ENCODE measurements at regions of chr7 and their contacts with region 1.

Region 1: GRCh38 chr7:98745722-98746318 is 124.0 kb downstream of the TMEM130 start:
- DNase-seq: peak; percentile 36 to 79 (median 60)
- ATAC-seq: peak in 1 of 4 donors; percentile 45
- H3K4me3 ChIP-seq: no peak overlapping the region
- H3K27ac ChIP-seq: no peak overlapping the region
- H3K4me1 ChIP-seq: no peaks in the 10 kb centered on the region
- H3K27me3 ChIP-seq: peaks cover 0 to 13% (median 0%) of the 10 kb centered on the region in 9 donors
- CTCF ChIP-seq: peak; percentile 55 to 82 (median 70)
- POLR2A ChIP-seq: no peak

Region 2: GRCh38 chr7:98294796-98295382 is 450.9 kb before region 1 on chr7:
- intact Hi-C with region 1: loop called in 3 of 10 experiments (anchors 10 kb)
- DNase-seq: peak in 1 of 5 donors; percentile 52
- ATAC-seq: peak; percentile 55 to 77 (median 69)
- H3K4me3 ChIP-seq: no peak overlapping the region
- H3K27ac ChIP-seq: peak overlapping the region in 2 of 12 donors; percentile 14 to 25
- H3K4me1 ChIP-seq: peaks cover 0 to 19% (median under 1%) of the 10 kb centered on the region in 12 donors
- H3K27me3 ChIP-seq: no peaks in the 10 kb centered on the region
- CTCF ChIP-seq: peak; percentile 38 to 72 (median 58)
- POLR2A ChIP-seq: peak in 1 of 2 donors; percentile 22

Region 3: GRCh38 chr7:98434095-98434494 is 311.7 kb before region 1 on chr7:
- intact Hi-C with region 1: loop called (anchors 1 to 5 kb)
- DNase-seq: no peak
- ATAC-seq: no peak
- H3K4me3 ChIP-seq: no peak overlapping the region
- H3K27ac ChIP-seq: no peak overlapping the region
- H3K4me1 ChIP-seq: no peaks in the 10 kb centered on the region
- H3K27me3 ChIP-seq: peaks cover 0 to 3% (median 0%) of the 10 kb centered on the region in 9 donors
- CTCF ChIP-seq: no peak
- POLR2A ChIP-seq: no peak

Measured in heart left ventricle (tissue), 16 donors.